Sigmoid colon (tissue), 7 donors: ENCODE measurements at regions of chr2 and their contacts with region 1.

Region 1: GRCh38 chr2:84022810-84023431 is 436.2 kb downstream of the SUCLG1 start:
- DNase-seq: no peak
- H3K4me3 ChIP-seq: no peak overlapping the region
- H3K27ac ChIP-seq: no peak overlapping the region
- H3K4me1 ChIP-seq: no peaks in the 10 kb centered on the region
- H3K27me3 ChIP-seq: no peaks in the 10 kb centered on the region
- CTCF ChIP-seq: peak in 2 of 4 experiments; percentile 5 to 50
- EP300 ChIP-seq: no peak
- POLR2A ChIP-seq: no peak

Region 2: DNA sequence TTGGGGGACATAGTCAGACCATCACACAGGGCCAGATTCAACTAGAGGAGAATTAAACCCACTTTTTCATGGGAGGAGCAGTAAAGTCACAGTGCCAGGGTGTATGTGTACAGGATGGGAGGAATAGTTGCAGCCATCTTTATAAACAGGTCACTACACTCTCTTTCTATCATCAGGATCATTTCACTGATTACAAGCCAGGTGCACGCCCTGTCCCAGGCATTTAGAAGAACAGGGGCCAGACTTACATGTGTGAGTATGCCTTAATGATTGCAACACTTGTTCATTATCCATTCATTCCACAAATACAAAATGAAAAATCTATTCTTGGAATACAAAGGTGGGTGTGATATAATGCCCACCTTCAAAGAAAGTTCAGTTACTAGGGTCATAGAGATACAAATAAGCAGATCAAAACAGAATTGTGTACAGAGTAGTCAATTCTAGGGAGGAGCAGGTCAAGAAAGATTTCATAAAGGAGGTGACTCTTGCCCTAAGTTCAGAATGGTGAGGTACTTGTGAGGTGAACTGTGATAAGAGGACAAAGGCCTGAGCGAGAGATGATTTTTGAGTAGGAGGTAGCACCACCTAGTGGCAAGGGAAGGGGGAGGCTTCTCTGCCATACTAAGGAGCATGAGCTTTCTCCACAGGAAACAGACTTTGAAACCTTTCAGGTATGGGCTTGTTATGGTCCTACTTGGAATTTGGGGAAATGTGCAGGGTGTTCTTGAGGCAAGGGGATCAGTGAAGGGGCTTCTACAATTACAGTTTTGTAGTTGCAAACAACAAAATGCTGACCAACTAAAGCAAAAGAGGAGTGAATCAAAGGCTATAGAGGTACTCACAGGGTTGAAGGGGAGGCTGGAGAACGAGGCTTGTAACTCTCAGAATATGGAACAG is 279.8 kb after region 1 on chr2:
- intact Hi-C with region 1: loop called (anchors 10 kb)
- DNase-seq: no peak
- H3K4me3 ChIP-seq: no peak overlapping the region
- H3K27ac ChIP-seq: no peak overlapping the region
- H3K4me1 ChIP-seq: no peaks in the 10 kb centered on the region
- H3K27me3 ChIP-seq: no peaks in the 10 kb centered on the region
- CTCF ChIP-seq: peak in 3 of 4 experiments; percentile 41 to 58 (median 43)
- EP300 ChIP-seq: no peak
- POLR2A ChIP-seq: no peak

Region 3: DNA sequence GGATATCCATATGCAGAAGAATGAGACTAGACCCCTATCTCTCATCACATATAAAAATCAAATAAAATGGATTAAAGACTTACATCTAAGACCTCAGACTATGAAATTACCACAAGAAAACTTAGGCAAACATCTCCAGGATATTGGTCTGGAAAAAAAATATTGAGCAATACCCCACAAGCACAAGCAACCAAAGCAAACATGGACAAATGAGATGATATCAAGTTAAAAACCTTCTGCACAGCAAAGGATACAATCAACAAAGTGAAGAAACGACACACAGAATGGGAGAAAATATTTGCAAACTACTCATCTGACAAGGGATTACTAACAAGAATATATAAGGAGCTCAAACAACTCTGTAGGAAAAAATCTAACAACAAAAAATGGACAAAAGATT is 312.9 kb after region 1 on chr2:
- intact Hi-C with region 1: no loop called
- DNase-seq: no peak
- H3K4me3 ChIP-seq: no peak overlapping the region
- H3K27ac ChIP-seq: no peak overlapping the region
- H3K4me1 ChIP-seq: no peaks in the 10 kb centered on the region
- H3K27me3 ChIP-seq: no peaks in the 10 kb centered on the region
- CTCF ChIP-seq: no peak
- EP300 ChIP-seq: no peak
- POLR2A ChIP-seq: no peak